ENCODE measurements at regions of chr2 and their contacts with region 1.

Region 1: DNA sequence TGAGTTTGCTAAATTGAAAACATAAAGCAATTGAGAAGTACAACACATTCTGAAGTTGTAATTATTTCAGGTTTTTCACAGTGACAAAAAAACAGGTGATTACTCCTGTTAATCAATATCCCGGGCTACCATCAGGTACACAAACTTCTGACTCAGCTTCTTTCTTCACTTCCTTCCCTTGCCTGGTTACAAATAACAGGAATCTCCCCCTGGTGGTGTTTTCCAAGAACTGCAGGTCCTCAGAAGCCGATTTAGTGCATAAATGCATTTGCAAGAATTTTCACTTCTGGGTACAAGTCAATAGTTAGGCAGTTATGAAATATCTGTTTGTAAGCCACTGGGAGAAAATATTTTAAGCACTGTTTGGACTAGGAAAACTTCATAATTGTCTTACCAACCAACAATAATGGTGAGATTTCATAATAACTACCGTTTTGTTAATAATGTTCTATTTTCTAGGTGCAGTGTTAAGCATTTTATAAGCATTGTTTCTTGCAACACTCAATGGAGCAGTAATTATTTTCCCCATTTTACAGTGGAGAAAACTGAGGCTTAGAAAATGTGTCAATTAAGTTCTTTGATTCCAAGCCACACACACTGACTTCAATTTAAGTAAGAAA is 12.4 kb upstream of the GMCL1 start:
- DNase-seq: peak; percentile 89 to 94 (median 92)
- H3K4me3 ChIP-seq: no peak overlapping the region
- H3K27ac ChIP-seq: no peak overlapping the region
- H3K4me1 ChIP-seq: peaks cover 4 to 11% (median 6%) of the 10 kb centered on the region in 4 experiments
- H3K27me3 ChIP-seq: no peaks in the 10 kb centered on the region

Region 2: DNA sequence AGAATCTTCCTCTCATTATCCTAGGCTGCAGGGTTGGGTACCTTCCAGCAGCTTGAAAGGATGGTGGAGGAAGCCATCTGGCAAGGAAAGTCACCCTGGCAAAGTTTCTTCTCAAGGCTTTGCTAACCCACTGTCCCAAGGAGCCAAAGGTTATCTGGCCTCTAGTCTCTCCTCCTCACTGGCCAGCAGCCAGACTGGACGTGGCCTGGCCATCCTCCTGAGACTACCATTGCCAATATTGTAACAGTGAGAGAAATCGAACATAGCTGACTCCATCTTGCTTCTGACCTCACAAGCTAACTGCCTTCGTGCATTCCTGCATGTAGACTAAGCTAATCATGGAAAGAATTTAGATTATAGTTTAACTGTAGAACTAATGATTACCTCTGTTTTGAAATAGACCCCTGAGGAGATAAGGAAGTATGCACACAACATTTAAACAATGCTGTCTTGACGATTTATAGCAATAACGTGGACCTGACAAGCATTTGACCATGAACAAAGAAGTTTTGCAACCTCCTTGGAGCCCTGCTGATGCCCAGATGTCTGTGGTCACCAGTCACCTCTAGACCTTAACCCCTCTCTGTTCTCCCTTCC is 82.9 kb before region 1 on chr2:
- CTCF ChIA-PET with region 1: interaction called, 10 read pairs
- POLR2A ChIA-PET with region 1: no interaction called
- DNase-seq: no peak
- H3K4me3 ChIP-seq: no peak overlapping the region
- H3K27ac ChIP-seq: no peak overlapping the region
- H3K4me1 ChIP-seq: no peaks in the 10 kb centered on the region
- H3K27me3 ChIP-seq: no peaks in the 10 kb centered on the region

Region 3: GRCh38 chr2:69767034-69767433 is 50.0 kb before region 1 on chr2:
- CTCF ChIA-PET with region 1: interaction called, 12 read pairs
- POLR2A ChIA-PET with region 1: no interaction called
- DNase-seq: peak in 1 of 3 donors; percentile 47
- H3K4me3 ChIP-seq: no peak overlapping the region
- H3K27ac ChIP-seq: no peak overlapping the region
- H3K4me1 ChIP-seq: peaks cover 0 to 20% (median 11%) of the 10 kb centered on the region in 4 experiments
- H3K27me3 ChIP-seq: no peaks in the 10 kb centered on the region

Region 4: DNA sequence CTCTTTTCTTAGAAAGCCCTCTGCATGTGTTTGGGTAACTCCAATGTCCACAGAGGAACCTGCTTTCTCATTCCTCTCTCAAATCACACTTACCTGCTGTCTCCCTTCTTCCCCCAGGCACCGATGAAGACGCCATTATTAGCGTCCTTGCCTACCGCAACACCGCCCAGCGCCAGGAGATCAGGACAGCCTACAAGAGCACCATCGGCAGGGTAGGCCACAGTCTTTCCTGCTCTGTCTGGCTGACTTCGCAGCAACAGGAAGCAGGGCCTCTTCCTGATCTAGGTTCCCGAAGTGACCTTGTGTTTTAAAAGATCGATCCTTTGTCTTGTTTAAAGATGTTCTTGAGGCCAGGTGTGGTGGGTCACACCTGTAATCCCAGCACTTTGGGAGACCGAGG is 12.6 kb before region 1 on chr2:
- CTCF ChIA-PET with region 1: interaction called, 56 read pairs
- POLR2A ChIA-PET with region 1: no interaction called
- DNase-seq: peak in 2 of 3 donors; percentile 29 to 49
- H3K4me3 ChIP-seq: peak overlapping the region in 3 of 7 experiments; percentile 3 to 56 (median 28)
- H3K27ac ChIP-seq: no peak overlapping the region
- H3K4me1 ChIP-seq: peaks cover 10 to 47% (median 21%) of the 10 kb centered on the region in 4 experiments
- H3K27me3 ChIP-seq: no peaks in the 10 kb centered on the region